ENCODE measurements at regions of chr6 and their contacts with region 1.

Region 1: GRCh38 chr6:18595774-18596530 is 208.8 kb downstream of the RNF144B start:
- DNase-seq: peak; percentile 43
- ATAC-seq: peak; percentile 96
- H3K4me3 ChIP-seq: no peak overlapping the region
- H3K27ac ChIP-seq: no peak overlapping the region
- H3K4me1 ChIP-seq: 0 out of 2 replicates have a peak, but pooled peaks cover 5% of the 10 kb centered on the region
- H3K27me3 ChIP-seq: no peaks in the 10 kb centered on the region
- CTCF ChIP-seq: peak; percentile 88
- EP300 ChIP-seq: no peak
- POLR2A ChIP-seq: no peak
- RAD21 ChIP-seq: peak; percentile 45; the same call in 1 of the 2 replicates

Region 2: DNA sequence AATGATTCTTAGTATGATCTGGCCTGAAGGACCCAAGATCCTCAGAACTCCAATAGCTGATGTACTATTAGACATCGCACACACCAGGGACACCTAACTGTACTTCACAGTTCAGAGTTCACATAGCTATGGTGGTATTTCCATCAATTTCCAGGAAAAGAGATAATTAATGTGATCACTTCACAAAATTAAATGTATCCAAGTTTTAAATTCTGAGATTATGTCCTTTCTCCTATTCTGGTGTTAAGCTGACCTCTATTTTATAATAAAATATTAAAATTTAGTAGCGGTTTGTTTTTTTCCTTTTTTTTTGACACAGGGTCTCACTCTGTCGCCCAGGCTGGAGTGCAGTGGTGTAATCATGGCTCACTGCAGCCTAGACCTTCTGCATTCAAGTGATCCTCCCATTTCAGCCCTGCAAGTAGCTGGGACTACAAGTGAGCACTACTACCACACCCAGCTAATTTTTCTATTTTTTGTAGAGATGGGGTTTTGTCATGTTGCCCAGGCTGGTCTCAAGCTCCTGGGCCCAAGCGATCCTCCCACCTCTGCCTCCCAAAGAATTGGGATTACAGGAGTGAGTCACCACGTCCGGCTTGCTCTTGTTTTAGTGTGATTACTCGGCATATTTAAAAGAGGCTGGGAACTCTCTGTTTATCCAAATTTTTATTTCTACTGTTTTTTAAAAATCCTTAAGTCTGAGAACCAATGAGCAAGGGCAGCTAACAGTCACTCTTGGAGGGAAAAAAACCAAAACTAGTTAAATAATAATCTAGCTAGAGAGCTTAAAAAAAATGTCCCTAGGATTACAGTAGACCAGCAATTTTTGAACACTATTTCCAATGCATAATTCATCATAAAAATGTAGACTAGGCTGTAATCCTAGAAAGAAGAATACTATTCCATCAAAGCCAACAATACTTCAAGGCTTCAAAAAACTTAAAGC is 624.6 kb before region 1 on chr6:
- CTCF ChIA-PET with region 1: no interaction called
- POLR2A ChIA-PET with region 1: no interaction called
- in situ Hi-C with region 1: no loop called
- intact Hi-C with region 1: no loop called
- DNase-seq: no peak
- ATAC-seq: no peak
- H3K4me3 ChIP-seq: no peak overlapping the region
- H3K27ac ChIP-seq: no peak overlapping the region
- H3K4me1 ChIP-seq: peaks cover 11% of the 10 kb centered on the region
- H3K27me3 ChIP-seq: no peaks in the 10 kb centered on the region
- CTCF ChIP-seq: no peak
- EP300 ChIP-seq: no peak
- POLR2A ChIP-seq: no peak
- RAD21 ChIP-seq: no peak

Region 3: GRCh38 chr6:18680842-18681241 is 84.9 kb after region 1 on chr6:
- CTCF ChIA-PET with region 1: interaction called, 5 read pairs
- POLR2A ChIA-PET with region 1: no interaction called
- in situ Hi-C with region 1: no loop called
- intact Hi-C with region 1: loop called (anchors 2 kb)
- DNase-seq: peak; percentile 25
- ATAC-seq: peak; percentile 70
- H3K4me3 ChIP-seq: no peak overlapping the region
- H3K27ac ChIP-seq: no peak overlapping the region
- H3K4me1 ChIP-seq: no peaks in the 10 kb centered on the region
- H3K27me3 ChIP-seq: no peaks in the 10 kb centered on the region
- CTCF ChIP-seq: no peak
- EP300 ChIP-seq: no peak
- POLR2A ChIP-seq: no peak
- RAD21 ChIP-seq: no peak

Region 4: DNA sequence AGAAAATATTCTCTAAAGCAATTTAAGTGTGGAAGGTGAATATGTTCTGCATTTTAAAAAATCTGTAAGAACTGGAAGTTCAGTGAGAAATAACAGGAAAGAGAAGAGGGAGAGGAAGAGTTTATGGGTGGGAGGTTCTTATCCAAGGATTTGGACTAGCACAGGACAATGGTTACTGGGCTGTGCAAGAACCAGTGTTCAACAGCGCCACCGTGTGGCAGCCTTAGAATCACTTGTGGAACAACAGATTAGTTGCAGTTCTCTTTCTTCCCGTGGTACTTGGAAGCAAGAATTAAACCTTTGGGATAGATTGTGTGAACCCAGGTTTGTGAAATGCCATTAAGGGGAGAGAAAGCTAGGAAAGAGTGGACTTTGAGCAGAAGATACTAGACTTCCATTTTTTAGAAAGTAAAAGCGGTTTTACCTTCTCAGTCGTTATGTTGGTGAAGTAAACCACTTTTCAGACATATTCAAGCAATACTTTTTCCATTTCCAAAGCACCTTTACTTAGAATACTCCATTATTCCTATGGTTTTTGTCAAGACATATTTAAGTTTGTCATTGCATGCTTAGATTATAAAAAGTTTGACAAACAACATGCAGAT is 227.9 kb after region 1 on chr6:
- CTCF ChIA-PET with region 1: interaction called, 5 read pairs
- POLR2A ChIA-PET with region 1: no interaction called
- in situ Hi-C with region 1: no loop called
- intact Hi-C with region 1: loop called (anchors 2 kb)
- DNase-seq: peak; percentile 33
- ATAC-seq: no peak
- H3K4me3 ChIP-seq: no peak overlapping the region
- H3K27ac ChIP-seq: no peak overlapping the region
- H3K4me1 ChIP-seq: no peaks in the 10 kb centered on the region
- H3K27me3 ChIP-seq: no peaks in the 10 kb centered on the region
- CTCF ChIP-seq: peak; percentile 62
- EP300 ChIP-seq: no peak
- POLR2A ChIP-seq: no peak
- RAD21 ChIP-seq: no peak